Right cardiac atrium (tissue), 5 donors: ENCODE measurements at regions of chr13 and their contacts with region 1.

Region 1: GRCh38 chr13:99269627-99270241 is 11.6 kb upstream of the GPR18 start:
- DNase-seq: no peak
- ATAC-seq: peak; percentile 62 to 71
- H3K4me3 ChIP-seq: no peak overlapping the region
- H3K27ac ChIP-seq: no peak overlapping the region
- H3K4me1 ChIP-seq: no peaks in the 10 kb centered on the region
- H3K27me3 ChIP-seq: no peaks in the 10 kb centered on the region

Region 2: DNA sequence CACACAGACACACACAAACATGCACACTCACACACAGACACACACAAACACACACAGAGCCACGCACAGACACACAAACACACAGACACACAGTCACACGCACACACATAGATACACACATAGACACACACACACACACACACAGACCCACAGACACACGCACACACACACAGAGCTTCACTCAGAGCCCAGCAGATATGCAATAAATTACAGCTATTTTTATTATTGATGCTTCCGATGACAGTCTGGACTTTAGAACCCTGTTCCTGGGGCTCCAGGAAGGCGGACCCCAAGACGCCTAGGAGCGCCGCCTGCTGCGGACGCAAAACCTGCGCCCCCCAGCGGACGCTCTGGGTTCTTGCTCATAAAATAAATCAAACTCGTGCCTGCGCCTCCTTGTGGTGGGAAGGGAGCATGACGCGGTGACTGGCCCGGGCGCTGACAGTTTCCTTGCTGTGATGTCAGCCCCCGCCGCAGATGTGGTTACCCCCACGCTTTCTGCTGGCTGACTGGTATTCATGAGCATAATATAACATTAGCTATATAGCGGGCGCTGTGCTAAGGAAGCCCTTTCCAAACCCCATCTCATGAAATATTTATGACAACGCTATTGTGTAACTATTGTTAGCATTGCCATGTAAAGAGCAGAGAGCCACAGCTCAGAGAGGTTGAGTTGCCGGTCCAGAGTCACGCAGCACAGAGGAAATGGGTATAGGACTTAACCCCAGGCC is 167.1 kb after region 1 on chr13:
- intact Hi-C with region 1: loop called (anchors 2 to 10 kb)
- DNase-seq: peak; percentile 85 to 93 (median 92)
- ATAC-seq: peak; percentile 55 to 64
- H3K4me3 ChIP-seq: no peak overlapping the region
- H3K27ac ChIP-seq: no peak overlapping the region
- H3K4me1 ChIP-seq: no peaks in the 10 kb centered on the region
- H3K27me3 ChIP-seq: no peaks in the 10 kb centered on the region